Activated CD4-positive, alpha-beta T cell treated with anti-CD3 and anti-CD28 coated beads for 36 hours (primary cell): ENCODE measurements at regions of chr16 and their contacts with region 1.

Region 1: DNA sequence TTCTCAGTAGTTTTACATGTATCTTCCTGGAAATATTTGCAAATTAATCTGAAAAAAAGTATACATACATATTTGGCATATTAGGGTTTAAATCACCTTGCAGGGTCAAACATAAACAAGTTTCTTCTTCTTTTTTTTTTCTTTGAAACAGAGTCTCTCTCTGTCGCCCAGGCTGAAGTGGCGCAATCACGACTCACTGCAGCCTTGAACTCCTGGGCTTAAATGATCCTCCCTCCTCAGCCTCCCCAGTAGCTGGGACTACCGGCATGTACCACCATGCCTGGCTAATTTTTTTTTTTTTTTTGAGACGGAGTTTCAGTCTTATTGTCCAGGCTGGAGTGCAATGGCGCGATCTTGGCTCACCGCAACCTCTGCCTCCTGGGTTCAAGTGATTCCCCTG is 12.6 kb upstream of the FUS start:
- DNase-seq: no peak
- ATAC-seq: no peak
- H3K4me3 Mint-ChIP-seq: no peak overlapping the region
- H3K27ac Mint-ChIP-seq: no peak overlapping the region
- H3K4me1 Mint-ChIP-seq: no peaks in the 10 kb centered on the region
- H3K27me3 Mint-ChIP-seq: no peaks in the 10 kb centered on the region

Region 2: DNA sequence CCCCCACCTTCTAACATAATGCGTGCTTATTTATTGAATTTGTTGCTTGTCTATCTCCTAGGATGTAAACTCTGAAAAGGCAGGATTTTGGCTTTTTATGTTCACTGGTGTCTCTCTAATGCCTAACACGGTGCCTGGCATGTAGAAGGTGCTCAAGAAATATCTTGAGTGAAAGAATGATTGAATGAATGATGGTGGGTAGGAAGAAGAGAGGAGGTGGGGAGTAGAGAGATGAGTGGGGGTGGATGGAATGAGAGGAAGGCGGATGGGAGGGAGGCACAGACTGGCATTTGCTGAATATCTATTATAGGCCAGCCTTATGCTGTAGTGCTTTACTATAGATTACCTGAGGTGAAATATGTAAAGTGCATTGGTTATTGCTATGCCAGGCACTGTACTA is 19.7 kb before region 1 on chr16:
- CTCF ChIA-PET with region 1: no interaction called
- POLR2A ChIA-PET with region 1: no interaction called
- intact Hi-C with region 1: loop called in 1 of 2 experiments (anchors 2 kb)
- DNase-seq: no peak
- ATAC-seq: no peak
- H3K4me3 Mint-ChIP-seq: no peak overlapping the region
- H3K27ac Mint-ChIP-seq: no peak overlapping the region
- H3K4me1 Mint-ChIP-seq: peaks cover 6% of the 10 kb centered on the region
- H3K27me3 Mint-ChIP-seq: no peaks in the 10 kb centered on the region

Region 3: GRCh38 chr16:31157136-31157535 is 10.2 kb before region 1 on chr16:
- CTCF ChIA-PET with region 1: interaction called, 4 read pairs
- POLR2A ChIA-PET with region 1: interaction called, 10 read pairs
- intact Hi-C with region 1: no loop called
- DNase-seq: no peak
- ATAC-seq: no peak
- H3K4me3 Mint-ChIP-seq: no peak overlapping the region
- H3K27ac Mint-ChIP-seq: no peak overlapping the region
- H3K4me1 Mint-ChIP-seq: peaks cover 7% of the 10 kb centered on the region
- H3K27me3 Mint-ChIP-seq: no peaks in the 10 kb centered on the region